ENCODE measurements at regions of chr6 and their contacts with region 1.

Region 1: GRCh38 chr6:26342106-26343004 is 22.6 kb upstream of the BTN3A2 start:
- DNase-seq: peak; percentile 46
- ATAC-seq: peak; percentile 63
- H3K4me3 Mint-ChIP-seq: peak overlapping the region; percentile 69
- H3K27ac Mint-ChIP-seq: peak overlapping the region; percentile 66
- H3K4me1 Mint-ChIP-seq: peaks cover 12% of the 10 kb centered on the region
- H3K27me3 Mint-ChIP-seq: no peaks in the 10 kb centered on the region
- CTCF ChIP-seq: no peak

Region 2: DNA sequence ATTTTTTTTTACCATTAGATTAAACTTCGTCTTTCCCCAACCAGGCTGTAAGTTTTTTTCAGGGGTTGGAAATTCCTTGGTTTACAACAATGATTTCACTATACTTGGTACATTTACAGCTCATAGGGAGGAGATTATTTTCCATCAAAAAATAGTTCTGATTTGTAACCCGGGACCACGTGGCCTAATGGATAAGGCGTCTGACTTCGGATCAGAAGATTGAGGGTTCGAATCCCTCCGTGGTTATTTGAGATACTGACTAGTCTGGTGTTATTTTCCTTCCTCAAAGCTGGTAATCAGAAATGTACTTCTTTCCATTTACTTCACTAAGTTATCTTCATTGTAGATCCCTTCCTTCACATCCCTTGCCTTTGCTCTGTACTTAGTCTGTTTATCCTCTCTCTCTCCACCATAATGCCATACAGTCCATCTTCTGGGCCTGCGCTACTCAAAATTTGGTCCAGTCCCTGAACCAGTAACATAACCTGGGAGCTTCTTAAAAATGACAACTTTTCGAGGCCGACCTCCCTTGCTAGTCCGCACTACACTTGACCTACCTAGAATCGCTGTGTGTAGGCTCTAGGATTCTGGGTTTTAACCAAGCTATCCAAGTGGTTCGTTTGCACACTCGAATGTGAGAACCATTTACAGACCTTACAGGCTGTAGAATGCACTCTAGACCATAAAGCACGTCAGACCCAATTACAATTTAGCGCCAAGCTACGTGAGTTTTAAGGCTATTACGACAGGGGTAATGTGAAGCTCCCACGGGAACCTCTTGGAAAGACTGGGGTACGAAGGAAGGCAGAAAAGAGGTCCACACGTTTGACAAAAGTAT is 19.5 kb before region 1 on chr6:
- CTCF ChIA-PET with region 1: interaction called, 31 read pairs
- POLR2A ChIA-PET with region 1: no interaction called
- intact Hi-C with region 1: no loop called
- DNase-seq: peak; percentile 79
- ATAC-seq: peak; percentile 65
- H3K4me3 Mint-ChIP-seq: peak overlapping the region; percentile 85
- H3K27ac Mint-ChIP-seq: peak overlapping the region; percentile 94
- H3K4me1 Mint-ChIP-seq: peaks cover 22% of the 10 kb centered on the region
- H3K27me3 Mint-ChIP-seq: peaks cover 8% of the 10 kb centered on the region
- CTCF ChIP-seq: no peak

Region 3: DNA sequence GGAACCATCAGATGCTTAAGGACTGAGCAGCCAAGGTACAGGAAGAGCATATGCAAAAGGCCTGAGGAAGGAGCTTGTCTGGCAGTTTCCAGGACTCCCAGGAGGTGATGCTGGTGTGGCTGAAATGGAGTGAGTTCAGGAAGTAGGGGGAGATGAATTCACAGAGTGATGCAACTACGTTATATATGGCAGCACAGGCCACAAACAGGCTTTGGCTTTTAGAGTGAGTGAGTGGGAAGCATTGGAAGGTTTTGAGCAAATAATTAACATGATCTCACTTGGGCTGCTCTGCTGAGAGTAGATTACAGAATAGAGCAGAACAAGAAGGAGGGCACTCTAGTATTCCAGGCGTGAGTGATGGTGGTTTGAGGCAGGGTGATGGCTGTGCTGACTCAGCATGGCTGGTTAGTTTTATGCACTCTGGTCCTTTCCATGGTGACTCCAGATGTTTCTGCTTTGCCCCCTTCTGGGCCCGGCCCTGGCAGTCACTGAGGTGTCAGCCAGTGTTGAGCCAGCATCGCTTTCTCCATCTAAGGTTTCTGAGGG is 47.1 kb after region 1 on chr6:
- CTCF ChIA-PET with region 1: no interaction called
- POLR2A ChIA-PET with region 1: no interaction called
- intact Hi-C with region 1: no loop called
- DNase-seq: no peak
- ATAC-seq: peak; percentile 24
- H3K4me3 Mint-ChIP-seq: no peak overlapping the region
- H3K27ac Mint-ChIP-seq: no peak overlapping the region
- H3K4me1 Mint-ChIP-seq: peaks cover 14% of the 10 kb centered on the region
- H3K27me3 Mint-ChIP-seq: no peaks in the 10 kb centered on the region
- CTCF ChIP-seq: no peak

Region 4: DNA sequence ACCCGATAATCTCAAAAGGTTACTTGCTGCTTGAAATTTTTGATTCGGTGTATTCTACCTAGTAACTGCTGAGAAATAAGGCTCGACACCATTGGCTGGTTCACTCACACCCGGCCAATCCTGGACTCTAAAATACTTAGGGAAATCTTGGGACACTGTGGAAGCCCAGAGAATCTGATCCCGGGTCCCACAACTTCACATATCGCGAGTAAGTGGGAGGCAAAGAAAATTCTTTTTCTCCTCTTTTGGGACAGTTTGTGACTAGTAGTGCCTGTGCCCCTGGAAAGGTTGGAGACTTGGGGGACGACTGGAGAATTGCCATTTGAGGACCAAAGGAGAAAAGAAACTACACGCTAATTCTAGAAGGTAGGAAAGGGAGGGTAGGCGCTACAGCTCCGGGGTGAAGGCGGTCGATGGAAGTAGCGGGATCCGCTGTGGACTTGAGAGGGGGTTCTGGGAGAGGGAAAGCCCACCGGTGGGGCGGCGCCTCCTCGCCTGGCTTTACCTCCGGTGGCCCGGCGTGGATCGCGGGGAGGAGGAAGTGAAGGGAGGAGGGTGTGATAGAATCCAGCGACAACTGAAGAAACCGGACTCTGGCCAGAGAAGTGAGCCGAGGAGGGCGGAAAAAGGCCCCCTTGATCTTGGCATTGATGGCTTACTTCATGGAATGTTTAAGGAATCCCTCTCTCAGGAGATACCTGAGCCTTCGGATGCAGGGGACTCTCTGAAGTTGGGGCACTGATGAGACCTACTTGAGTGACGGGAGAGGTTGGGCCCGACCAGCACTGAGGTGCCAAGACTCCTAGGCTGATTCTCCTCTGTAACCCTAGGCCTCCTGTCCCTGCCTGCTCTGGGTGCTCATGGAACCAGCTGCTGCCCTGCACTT is 79.1 kb after region 1 on chr6:
- CTCF ChIA-PET with region 1: interaction called, 10 read pairs
- POLR2A ChIA-PET with region 1: no interaction called
- intact Hi-C with region 1: no loop called
- DNase-seq: peak; percentile 67
- ATAC-seq: peak; percentile 95
- H3K4me3 Mint-ChIP-seq: no peak overlapping the region
- H3K27ac Mint-ChIP-seq: no peak overlapping the region
- H3K4me1 Mint-ChIP-seq: peaks cover 8% of the 10 kb centered on the region
- H3K27me3 Mint-ChIP-seq: no peaks in the 10 kb centered on the region
- CTCF ChIP-seq: no peak

Region 5: GRCh38 chr6:26568601-26569432 is 226.5 kb after region 1 on chr6:
- CTCF ChIA-PET with region 1: interaction called, 17 read pairs
- POLR2A ChIA-PET with region 1: interaction called, 3 read pairs
- intact Hi-C with region 1: loop called (anchors 5 kb)
- DNase-seq: peak; percentile 95
- ATAC-seq: peak; percentile 75
- H3K4me3 Mint-ChIP-seq: peak overlapping the region; percentile 89
- H3K27ac Mint-ChIP-seq: peak overlapping the region; percentile 88
- H3K4me1 Mint-ChIP-seq: peaks cover 23% of the 10 kb centered on the region
- H3K27me3 Mint-ChIP-seq: peaks cover 3% of the 10 kb centered on the region
- CTCF ChIP-seq: peak; percentile 43

Region 6: GRCh38 chr6:26596579-26597388 is 254.4 kb after region 1 on chr6 and contains the start of gene ABT1:
- CTCF ChIA-PET with region 1: interaction called, 15 read pairs
- POLR2A ChIA-PET with region 1: interaction called, 3 read pairs
- intact Hi-C with region 1: no loop called
- DNase-seq: peak; percentile 98
- ATAC-seq: peak; percentile 77
- H3K4me3 Mint-ChIP-seq: no peak within 1 kb of the TSS
- H3K27ac Mint-ChIP-seq: no peak within 1 kb of the TSS
- H3K4me1 Mint-ChIP-seq: peaks cover 40% of the 10 kb centered on the region
- H3K27me3 Mint-ChIP-seq: peaks cover 14% of the 10 kb centered on the region
- CTCF ChIP-seq: no peak
- total RNA-seq, gene ABT1: 27.7 to 27.9 TPM